HEK293 (cell line): ENCODE measurements at regions of chr15 and their contacts with region 1.

Region 1: GRCh38 chr15:67456677-67457529 is 64.0 kb upstream of the C15orf61 start:
- H3K4me3 ChIP-seq: no peak overlapping the region
- H3K27ac ChIP-seq: no peak overlapping the region
- H3K4me1 ChIP-seq: no peaks in the 10 kb centered on the region
- CTCF ChIP-seq: peak; percentile 76

Region 2: DNA sequence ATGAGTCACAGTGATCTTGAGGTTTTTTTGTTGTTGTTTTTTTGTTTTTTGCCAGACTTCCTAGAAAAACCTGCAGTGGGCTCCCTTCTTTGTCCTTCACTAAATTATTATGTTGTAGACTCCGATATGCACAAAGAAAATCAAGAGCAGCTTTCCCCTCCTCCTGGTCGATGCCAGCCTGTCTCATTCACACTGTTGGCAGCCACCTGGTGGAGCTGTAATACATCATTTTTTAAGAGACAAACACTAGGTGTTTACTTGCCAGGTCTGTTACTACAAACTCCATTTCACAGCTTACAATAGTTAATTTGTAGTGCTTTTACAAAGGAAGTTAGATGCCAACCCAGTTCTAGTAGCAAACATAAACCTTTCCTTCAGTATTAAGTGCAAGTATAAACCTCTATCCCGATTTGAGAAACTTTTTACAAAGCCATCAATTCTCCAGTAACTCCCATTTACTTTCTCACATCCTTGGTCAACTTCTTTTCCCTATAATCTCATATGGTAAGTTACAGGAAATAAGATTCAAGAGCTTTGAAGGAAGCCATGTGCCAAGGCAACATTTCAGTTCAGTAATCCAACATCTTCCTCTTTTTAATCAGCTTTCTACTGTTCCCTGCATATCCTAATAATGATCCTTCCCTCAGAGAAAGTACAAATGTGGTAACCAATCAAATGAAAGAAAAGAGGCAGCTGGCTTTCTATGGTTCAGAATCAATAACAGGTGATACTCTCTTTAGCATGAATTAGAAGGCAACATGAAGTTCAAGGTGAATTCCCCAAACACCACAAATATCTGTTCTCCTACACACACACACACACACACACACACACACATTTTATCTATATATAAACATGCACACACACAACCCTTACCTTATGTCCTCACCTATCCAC is 216.4 kb before region 1 on chr15:
- CTCF ChIA-PET with region 1: no interaction called
- POLR2A ChIA-PET with region 1: no interaction called
- H3K4me3 ChIP-seq: no peak overlapping the region
- H3K27ac ChIP-seq: no peak overlapping the region
- H3K4me1 ChIP-seq: peaks cover 22% of the 10 kb centered on the region
- CTCF ChIP-seq: peak; percentile 40

Region 3: GRCh38 chr15:67444100-67444499 is 12.8 kb before region 1 on chr15:
- CTCF ChIA-PET with region 1: interaction called, 25 read pairs
- POLR2A ChIA-PET with region 1: no interaction called
- H3K4me3 ChIP-seq: no peak overlapping the region
- H3K27ac ChIP-seq: no peak overlapping the region
- H3K4me1 ChIP-seq: no peaks in the 10 kb centered on the region
- CTCF ChIP-seq: no peak

Region 4: DNA sequence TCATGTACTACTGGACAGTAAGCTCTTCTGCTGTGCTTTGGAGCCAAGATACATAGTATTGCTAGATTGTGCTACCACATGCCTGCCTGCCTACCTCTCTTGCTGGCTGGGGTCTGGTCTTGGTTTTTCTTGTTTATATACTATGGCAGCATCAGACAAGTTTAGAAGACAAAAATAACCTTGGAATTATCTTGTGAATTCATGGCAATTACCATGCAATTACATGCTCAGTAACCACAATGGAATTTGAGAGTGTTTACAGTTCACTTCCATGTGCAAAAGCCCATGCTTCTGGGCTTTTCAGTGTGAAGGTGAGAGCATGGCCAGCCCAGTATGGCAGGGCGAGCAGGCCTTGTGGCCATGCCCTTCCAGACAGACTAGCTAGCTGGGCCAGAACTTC is 16.1 kb after region 1 on chr15:
- CTCF ChIA-PET with region 1: interaction called, 31 read pairs
- POLR2A ChIA-PET with region 1: no interaction called
- H3K4me3 ChIP-seq: no peak overlapping the region
- H3K27ac ChIP-seq: no peak overlapping the region
- H3K4me1 ChIP-seq: no peaks in the 10 kb centered on the region
- CTCF ChIP-seq: no peak

Region 5: GRCh38 chr15:67501177-67501835 is 44.4 kb after region 1 on chr15:
- CTCF ChIA-PET with region 1: interaction called, 25 read pairs
- POLR2A ChIA-PET with region 1: no interaction called
- H3K4me3 ChIP-seq: no peak overlapping the region
- H3K27ac ChIP-seq: no peak overlapping the region
- H3K4me1 ChIP-seq: peaks cover 7% of the 10 kb centered on the region; the same call in 1 of the 2 replicates
- CTCF ChIP-seq: peak; percentile 50; the same call in 1 of the 2 replicates

Region 6: DNA sequence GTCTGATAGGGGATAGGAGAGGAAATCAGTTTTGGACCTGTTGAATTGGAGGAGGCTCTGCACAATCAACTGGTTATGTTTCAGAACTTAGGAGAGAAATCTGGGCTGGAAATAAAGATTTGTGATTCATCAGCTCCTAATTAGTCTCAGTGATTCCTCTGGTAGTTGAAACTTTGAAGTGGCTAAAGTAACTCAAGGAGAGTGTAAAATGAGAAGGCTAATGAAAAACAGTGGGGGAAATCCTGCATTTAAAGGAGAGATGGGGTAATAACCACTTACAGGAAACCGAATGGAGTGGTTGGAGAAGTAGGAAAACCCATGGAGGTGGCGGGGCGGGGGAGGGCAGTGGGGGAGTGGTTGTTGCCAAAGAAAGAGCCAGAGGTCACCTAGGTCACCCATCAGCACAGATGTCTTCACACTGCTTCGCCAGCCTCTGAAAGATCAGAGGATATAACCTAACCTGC is 118.2 kb after region 1 on chr15:
- CTCF ChIA-PET with region 1: no interaction called
- POLR2A ChIA-PET with region 1: no interaction called
- H3K4me3 ChIP-seq: no peak overlapping the region
- H3K27ac ChIP-seq: no peak overlapping the region
- H3K4me1 ChIP-seq: peaks cover 34% of the 10 kb centered on the region
- CTCF ChIP-seq: no peak

Region 7: GRCh38 chr15:67700023-67700422 is 243.1 kb after region 1 on chr15:
- CTCF ChIA-PET with region 1: no interaction called
- POLR2A ChIA-PET with region 1: no interaction called
- H3K4me3 ChIP-seq: no peak overlapping the region
- H3K27ac ChIP-seq: no peak overlapping the region
- H3K4me1 ChIP-seq: no peaks in the 10 kb centered on the region
- CTCF ChIP-seq: no peak

Region 8: DNA sequence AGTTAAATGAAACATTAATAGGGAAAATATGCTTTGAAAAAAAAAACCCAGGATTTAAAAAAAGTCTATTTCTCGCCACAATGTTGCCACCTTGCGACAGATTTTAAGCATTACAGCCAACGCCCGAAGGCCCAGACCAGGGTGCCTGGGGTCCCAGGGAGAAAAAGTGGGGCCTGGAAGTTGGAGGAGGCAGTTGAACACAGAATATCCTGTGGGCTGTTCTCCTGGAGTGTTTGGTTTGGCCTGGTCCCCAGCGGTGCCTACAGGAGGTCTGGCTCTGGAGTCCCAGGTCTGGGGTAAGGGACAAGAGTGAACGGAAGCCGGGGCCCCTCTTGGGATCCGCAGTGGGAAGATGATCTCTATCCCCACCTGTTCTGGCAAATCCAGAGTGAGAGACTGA is 379.6 kb after region 1 on chr15:
- CTCF ChIA-PET with region 1: interaction called, 59 read pairs
- POLR2A ChIA-PET with region 1: no interaction called
- H3K4me3 ChIP-seq: no peak overlapping the region
- H3K27ac ChIP-seq: no peak overlapping the region
- H3K4me1 ChIP-seq: no peaks in the 10 kb centered on the region; the same call in 1 of the 2 replicates
- CTCF ChIP-seq: peak; percentile 59; the same call in 1 of the 2 replicates